ENCODE measurements at regions of chr1 and their contacts with region 1.

Region 1: GRCh38 chr1:39538588-39539465 is 37.8 kb downstream of the PABPC4 start:
- DNase-seq: peak; percentile 9
- H3K4me3 ChIP-seq: no peak overlapping the region
- CTCF ChIP-seq: peak; percentile 79

Region 2: DNA sequence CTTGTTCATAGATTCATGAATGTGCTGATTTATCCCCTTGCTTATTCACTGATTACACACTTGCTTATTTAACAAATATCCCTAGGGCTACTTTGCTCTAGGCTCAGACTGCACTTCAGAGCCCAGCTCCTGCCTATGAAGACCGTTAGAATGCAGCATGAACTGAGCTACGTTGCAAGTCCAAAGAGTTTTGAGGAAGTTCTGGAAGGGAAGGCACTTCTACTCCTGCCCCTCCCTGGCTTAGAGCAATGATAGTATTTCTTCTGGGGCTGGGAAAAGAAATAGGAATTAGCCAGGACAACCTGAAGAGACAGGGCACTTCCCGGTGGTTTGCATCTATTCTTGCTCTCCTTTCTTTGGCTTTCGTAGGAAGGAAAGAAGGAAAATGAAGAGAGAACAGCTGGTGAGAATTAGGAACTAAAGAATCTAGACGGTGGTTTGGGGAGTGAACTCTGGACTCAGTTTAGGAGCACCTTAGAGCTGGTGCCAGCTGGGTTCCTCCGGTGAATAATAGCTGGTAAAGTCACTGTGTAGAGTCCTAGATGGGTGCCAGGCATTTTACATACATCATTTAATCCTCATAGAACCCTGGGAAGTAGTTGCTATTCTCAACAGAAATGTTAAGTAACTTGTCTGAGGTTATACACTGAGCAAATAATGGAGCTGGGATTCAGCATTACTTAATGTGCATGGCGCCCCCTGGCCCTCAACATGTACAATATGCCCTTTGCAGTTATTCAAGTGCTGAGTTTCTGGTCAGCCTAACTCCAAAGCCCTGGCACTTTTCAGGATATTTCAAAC is 446.8 kb before region 1 on chr1:
- CTCF ChIA-PET with region 1: interaction called, 19 read pairs
- POLR2A ChIA-PET with region 1: no interaction called
- DNase-seq: no peak
- H3K4me3 ChIP-seq: no peak overlapping the region
- CTCF ChIP-seq: peak; percentile 82

Region 3: GRCh38 chr1:39398278-39399021 is 140.4 kb before region 1 on chr1:
- CTCF ChIA-PET with region 1: no interaction called
- POLR2A ChIA-PET with region 1: no interaction called
- DNase-seq: peak; percentile 91
- H3K4me3 ChIP-seq: no peak overlapping the region
- CTCF ChIP-seq: no peak

Region 4: DNA sequence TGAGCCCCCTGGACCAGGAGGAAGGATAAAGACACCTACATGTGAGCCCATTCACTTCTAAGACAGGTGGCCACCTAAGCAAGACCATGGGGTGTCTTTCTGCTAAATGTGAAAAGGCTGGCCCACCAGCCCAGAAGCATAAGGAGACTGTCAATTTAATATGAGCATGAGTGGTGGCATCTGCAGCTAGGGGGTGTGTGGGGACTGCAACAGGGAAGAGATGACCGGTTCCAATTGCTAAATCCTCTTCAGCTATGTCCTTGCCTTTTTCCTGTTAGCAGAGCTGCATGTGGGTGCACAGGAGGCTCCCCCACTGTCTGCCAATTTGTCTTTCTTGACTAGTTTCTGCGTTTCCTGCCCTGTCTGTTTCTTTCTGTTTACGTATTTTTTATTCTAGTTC is 69.7 kb before region 1 on chr1:
- CTCF ChIA-PET with region 1: interaction called, 40 read pairs
- POLR2A ChIA-PET with region 1: interaction called, 3 read pairs
- DNase-seq: no peak
- H3K4me3 ChIP-seq: no peak overlapping the region
- CTCF ChIP-seq: no peak

Region 5: DNA sequence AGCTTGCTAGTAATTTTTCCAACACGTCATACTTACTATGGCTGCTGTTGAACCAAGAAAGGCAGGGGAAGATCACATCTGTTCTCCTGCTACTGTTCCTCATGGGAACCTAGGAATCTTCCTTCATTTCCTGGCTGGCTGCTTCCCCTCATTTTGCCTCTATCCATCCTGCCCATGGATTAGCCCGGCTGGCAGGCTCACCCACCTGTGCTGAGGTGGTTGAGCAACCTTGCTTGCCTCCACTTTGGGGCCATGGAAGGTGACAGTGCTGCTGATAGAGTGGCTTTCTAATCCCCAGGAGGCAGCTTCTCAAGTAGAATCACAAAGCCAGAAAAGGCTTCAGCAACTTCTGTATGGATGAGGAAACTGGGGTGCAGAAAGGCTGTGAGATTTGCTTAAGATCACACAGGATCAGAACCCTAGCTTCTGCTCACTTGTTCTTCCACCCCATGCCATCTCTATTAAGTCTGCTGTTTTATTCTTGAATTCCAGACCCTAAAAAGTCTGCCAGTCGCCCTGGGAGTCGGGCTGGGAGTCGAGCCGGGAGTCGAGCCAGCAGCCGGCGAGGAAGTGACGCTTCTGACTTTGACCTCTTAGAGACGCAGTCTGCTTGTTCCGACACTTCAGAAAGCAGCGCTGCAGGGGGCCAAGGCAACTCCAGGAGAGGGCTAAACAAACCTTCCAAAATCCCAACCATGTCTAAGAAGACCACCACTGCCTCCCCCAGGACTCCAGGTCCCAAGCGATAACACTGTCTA is 53.6 kb before region 1 on chr1:
- CTCF ChIA-PET with region 1: interaction called, 14 read pairs
- POLR2A ChIA-PET with region 1: no interaction called
- DNase-seq: no peak
- H3K4me3 ChIP-seq: no peak overlapping the region
- CTCF ChIP-seq: no peak

Region 6: GRCh38 chr1:39525366-39526165 is 13.3 kb before region 1 on chr1:
- CTCF ChIA-PET with region 1: interaction called, 77 read pairs
- POLR2A ChIA-PET with region 1: no interaction called
- DNase-seq: no peak
- H3K4me3 ChIP-seq: no peak overlapping the region
- CTCF ChIP-seq: no peak

Region 7: GRCh38 chr1:39554277-39554676 is 15.4 kb after region 1 on chr1:
- CTCF ChIA-PET with region 1: interaction called, 110 read pairs
- POLR2A ChIA-PET with region 1: no interaction called
- DNase-seq: no peak
- H3K4me3 ChIP-seq: no peak overlapping the region
- CTCF ChIP-seq: no peak

Region 8: DNA sequence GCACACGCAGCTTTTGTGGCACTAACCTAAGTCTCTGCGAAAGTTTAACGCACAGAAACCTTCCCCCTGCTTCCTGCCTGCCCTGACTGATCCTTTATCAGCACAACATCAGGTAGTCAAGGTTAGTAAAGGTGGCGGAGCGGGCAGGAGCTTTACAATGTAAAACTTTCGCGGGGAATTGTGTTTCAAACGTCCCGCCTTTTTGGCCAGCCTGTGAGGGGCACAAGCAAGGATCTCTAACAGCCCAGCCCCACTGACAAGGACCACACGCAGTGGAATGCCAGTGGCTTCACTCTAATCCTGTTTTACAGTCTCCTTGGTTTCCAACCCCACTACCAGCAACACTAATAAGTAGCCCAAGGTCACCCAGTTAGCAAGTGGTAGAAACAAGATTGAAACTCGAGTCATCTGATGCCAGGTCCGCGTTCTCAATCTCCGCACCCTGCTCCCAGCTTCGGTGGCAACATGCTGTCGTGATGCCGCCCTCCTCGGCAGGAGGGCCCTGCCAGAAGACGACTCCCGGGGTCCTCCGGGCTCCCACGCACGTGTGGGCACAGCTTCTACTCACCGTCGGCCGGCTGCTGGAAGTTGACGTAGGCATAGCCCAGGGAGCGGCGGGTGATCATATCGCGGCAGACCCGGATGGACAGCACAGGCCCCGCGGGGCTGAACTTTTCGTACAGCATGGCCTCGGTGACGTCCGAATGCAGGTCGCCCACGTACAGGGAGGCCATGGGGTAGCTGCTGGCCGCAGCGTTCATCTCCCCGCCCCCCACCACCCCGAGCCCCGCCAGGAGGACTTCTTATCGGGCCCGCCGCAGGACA is 36.6 kb after region 1 on chr1:
- CTCF ChIA-PET with region 1: interaction called, 21 read pairs
- POLR2A ChIA-PET with region 1: no interaction called
- DNase-seq: no peak
- H3K4me3 ChIP-seq: peak overlapping the region; percentile 78
- CTCF ChIP-seq: no peak

Measured in AG04449 (cell line).